ENCODE measurements at regions of chr16 and their contacts with region 1.

Region 1: DNA sequence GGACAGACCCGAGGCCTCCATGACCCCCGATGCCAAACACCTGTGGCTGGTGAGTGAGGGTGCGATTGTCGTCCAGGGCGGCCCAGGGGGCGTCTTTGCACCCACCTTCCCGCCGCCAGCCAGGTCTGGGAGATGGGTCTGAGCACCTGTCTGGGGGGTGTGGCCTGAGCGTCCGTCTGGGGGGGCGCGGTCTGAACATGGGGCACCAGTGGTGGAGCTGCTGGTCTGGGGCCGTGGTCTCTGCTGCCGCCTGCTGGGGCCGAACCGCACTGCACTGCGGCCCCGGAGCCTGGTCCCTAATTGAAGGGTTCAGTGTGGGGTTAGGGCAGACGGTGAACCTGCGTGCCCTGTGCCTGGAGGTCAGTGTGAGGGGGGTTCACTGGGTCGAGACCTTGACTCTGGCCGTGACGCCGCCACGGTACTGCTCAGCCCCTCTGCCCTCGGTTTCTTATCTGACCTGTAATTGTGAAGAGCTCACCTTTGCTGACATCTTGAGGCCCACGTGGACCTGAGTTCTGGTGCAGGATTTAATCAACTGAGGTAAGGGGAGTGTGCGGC is 12.6 kb upstream of the TCF25 start:
- DNase-seq: peak; percentile 52
- ATAC-seq: peak; percentile 90
- H3K4me3 ChIP-seq: no peak overlapping the region
- H3K27ac ChIP-seq: no peak overlapping the region
- H3K4me1 ChIP-seq: 0 out of 2 replicates have a peak, but pooled peaks cover 4% of the 10 kb centered on the region
- H3K27me3 ChIP-seq: no peaks in the 10 kb centered on the region
- CTCF ChIP-seq: peak; percentile 99
- EP300 ChIP-seq: no peak
- POLR2A ChIP-seq: no peak
- RAD21 ChIP-seq: peak; percentile 99

Region 2: GRCh38 chr16:89749647-89750046 is 111.2 kb before region 1 on chr16:
- CTCF ChIA-PET with region 1: interaction called, 3 read pairs
- POLR2A ChIA-PET with region 1: no interaction called
- in situ Hi-C with region 1: no loop called
- intact Hi-C with region 1: loop called (anchors 1 kb)
- DNase-seq: no peak
- ATAC-seq: no peak
- H3K4me3 ChIP-seq: no peak overlapping the region
- H3K27ac ChIP-seq: no peak overlapping the region
- H3K4me1 ChIP-seq: no peaks in the 10 kb centered on the region
- H3K27me3 ChIP-seq: no peaks in the 10 kb centered on the region
- CTCF ChIP-seq: no peak
- EP300 ChIP-seq: no peak
- POLR2A ChIP-seq: no peak
- RAD21 ChIP-seq: no peak

Region 3: DNA sequence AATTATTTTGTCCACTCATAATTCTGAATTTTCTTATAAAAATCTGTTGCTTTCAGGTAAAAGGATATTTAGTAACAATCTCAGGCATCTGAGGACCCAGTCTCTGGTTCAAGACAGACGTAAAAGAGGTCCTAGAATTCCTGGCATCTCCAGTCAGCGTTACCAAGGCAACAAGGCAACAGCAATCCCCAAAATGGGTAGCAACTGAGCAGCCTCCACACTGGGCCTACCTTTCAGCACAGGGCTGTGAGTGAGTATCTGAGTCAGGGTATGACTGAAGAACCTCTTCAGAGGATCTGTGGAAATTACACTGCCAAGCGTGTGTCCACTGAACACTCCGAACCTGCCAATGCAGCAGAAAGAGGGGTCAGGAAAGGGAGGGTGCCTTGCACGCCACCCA is 65.2 kb before region 1 on chr16:
- CTCF ChIA-PET with region 1: interaction called, 11 read pairs
- POLR2A ChIA-PET with region 1: no interaction called
- in situ Hi-C with region 1: no loop called
- intact Hi-C with region 1: loop called (anchors 2 kb)
- DNase-seq: no peak
- ATAC-seq: no peak; the same call in 2 of the 3 replicates
- H3K4me3 ChIP-seq: no peak overlapping the region
- H3K27ac ChIP-seq: no peak overlapping the region
- H3K4me1 ChIP-seq: no peaks in the 10 kb centered on the region
- H3K27me3 ChIP-seq: no peaks in the 10 kb centered on the region
- CTCF ChIP-seq: no peak
- EP300 ChIP-seq: no peak
- POLR2A ChIP-seq: no peak
- RAD21 ChIP-seq: no peak

Region 4: DNA sequence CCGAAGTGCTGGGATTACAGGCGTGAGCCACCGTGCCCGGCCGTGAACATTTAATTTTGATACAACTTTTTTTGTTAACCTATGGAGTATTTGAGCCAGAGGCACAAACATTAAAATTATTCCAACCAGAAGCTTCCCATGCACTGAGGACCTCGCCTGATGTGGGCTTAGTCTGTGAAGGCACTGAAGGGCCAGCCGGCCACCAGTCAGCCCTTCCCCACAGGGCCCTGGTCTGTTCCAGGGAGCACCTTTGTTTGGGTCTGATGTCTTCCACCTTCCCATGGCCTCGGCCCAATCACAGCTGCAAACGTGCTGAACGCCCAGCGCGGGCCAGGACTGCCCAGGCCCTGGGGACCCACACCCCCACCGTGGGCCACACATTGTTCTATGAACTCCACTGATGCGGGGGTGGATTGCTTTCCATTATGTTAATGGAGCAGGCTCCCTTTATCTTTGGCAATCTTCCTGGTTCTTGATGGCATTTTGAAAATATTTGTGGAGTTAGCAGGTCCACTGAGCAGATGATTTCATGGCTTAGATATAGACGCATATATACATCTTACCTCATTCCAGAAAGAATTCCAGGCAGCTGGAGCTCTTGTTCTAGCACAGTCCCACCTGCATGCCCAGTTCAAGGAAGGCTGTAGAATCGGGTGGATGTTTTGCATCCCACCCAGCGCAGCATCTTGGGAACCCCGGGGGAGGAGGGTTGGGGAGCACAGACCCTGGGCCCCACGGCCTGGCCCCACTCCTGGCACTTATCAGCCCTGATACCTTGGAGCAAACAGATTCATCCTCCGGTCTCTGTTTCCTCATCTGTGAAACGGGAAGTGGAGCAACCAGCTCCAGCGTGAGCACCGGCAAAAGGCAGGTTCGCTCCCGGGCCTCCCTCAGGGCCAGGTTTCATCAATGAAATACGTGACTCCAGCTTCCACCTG is 18.1 kb before region 1 on chr16:
- CTCF ChIA-PET with region 1: interaction called, 3 read pairs
- POLR2A ChIA-PET with region 1: interaction called, 9 read pairs
- in situ Hi-C with region 1: no loop called
- intact Hi-C with region 1: loop called (anchors 1 kb)
- DNase-seq: peak; percentile 87
- ATAC-seq: peak; percentile 60
- H3K4me3 ChIP-seq: peak overlapping the region; percentile 14 to 42 (median 16); a peak in 5 of 6 replicates
- H3K27ac ChIP-seq: peak overlapping the region; percentile 47
- H3K4me1 ChIP-seq: peaks cover 43% of the 10 kb centered on the region
- H3K27me3 ChIP-seq: no peaks in the 10 kb centered on the region
- CTCF ChIP-seq: no peak; the same call in 1 of the 2 replicates
- EP300 ChIP-seq: no peak
- POLR2A ChIP-seq: no peak; a peak in 1 of 4 replicates
- RAD21 ChIP-seq: no peak

Region 5: GRCh38 chr16:89893642-89894509 is 33.0 kb after region 1 on chr16:
- CTCF ChIA-PET with region 1: no interaction called
- POLR2A ChIA-PET with region 1: no interaction called
- in situ Hi-C with region 1: no loop called
- intact Hi-C with region 1: no loop called
- DNase-seq: no peak
- ATAC-seq: peak; percentile 20
- H3K4me3 ChIP-seq: no peak overlapping the region
- H3K27ac ChIP-seq: no peak overlapping the region
- H3K4me1 ChIP-seq: no peaks in the 10 kb centered on the region
- H3K27me3 ChIP-seq: no peaks in the 10 kb centered on the region
- CTCF ChIP-seq: no peak
- EP300 ChIP-seq: no peak
- POLR2A ChIP-seq: no peak
- RAD21 ChIP-seq: no peak

Region 6: DNA sequence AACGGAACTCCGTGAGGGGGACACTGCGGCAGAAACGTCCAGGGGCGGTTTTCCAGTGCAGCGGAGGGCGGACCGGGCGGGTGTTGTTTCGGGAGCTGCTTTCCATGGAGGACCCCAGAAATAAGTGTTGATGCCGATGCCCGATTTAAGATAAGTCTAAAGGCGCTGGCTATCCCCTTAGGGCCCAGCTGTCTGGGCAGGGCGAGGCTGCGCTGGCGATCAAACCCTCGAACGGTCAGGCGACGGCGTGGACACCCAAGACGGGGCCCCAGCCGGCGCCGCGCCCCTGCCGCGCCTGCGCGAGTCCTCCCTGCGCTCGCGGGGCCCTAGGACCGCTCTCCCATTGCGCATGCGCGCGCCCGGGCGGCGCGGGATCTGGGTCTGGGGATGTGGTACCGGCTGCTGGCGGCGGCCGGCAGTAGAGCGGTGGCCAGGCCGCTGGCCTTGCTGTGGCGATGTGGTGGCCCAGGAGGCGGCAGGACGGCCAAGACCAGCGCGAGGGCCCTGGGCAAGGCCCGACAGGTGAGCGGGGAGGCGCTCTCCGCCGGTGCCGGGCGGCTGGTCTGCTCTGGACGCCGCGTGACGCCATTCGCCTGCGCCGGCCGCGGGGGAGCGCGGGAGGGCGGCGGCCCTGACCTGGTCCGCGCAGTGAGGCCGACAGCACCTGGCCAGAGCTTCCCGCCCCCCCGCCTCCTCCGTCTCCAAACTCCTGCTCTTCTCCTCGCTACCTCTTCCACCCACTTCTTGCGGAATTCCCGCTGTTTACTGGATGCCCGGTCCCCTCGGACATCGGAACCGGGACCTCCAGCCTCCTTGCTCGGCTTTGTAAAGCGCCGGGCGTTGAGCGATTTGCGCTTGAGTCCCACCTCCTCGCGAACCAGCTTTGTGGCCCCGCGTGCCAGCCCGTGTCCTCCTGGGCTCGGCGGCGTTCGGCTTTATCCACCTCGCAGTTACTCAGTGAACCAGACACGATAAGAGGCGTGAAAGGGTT is 111.7 kb after region 1 on chr16:
- CTCF ChIA-PET with region 1: no interaction called
- POLR2A ChIA-PET with region 1: no interaction called
- in situ Hi-C with region 1: no loop called
- intact Hi-C with region 1: no loop called
- DNase-seq: peak; percentile 92
- ATAC-seq: peak; percentile 85
- H3K4me3 ChIP-seq: peak overlapping the region; percentile 76 to 96 (median 95)
- H3K27ac ChIP-seq: peak overlapping the region; percentile 88
- H3K4me1 ChIP-seq: peaks cover 49% of the 10 kb centered on the region
- H3K27me3 ChIP-seq: no peaks in the 10 kb centered on the region; a peak in 1 of 5 replicates
- CTCF ChIP-seq: peak; percentile 31; the same call in 1 of the 2 replicates
- EP300 ChIP-seq: peak in 1 of 2 experiments; percentile 47; a peak in 1 of 4 replicates
- POLR2A ChIP-seq: peak; percentile 92 to 97
- RAD21 ChIP-seq: peak; percentile 64; the same call in 1 of the 2 replicates